ENCODE measurements at regions of chr19 and their contacts with region 1.

Region 1: DNA sequence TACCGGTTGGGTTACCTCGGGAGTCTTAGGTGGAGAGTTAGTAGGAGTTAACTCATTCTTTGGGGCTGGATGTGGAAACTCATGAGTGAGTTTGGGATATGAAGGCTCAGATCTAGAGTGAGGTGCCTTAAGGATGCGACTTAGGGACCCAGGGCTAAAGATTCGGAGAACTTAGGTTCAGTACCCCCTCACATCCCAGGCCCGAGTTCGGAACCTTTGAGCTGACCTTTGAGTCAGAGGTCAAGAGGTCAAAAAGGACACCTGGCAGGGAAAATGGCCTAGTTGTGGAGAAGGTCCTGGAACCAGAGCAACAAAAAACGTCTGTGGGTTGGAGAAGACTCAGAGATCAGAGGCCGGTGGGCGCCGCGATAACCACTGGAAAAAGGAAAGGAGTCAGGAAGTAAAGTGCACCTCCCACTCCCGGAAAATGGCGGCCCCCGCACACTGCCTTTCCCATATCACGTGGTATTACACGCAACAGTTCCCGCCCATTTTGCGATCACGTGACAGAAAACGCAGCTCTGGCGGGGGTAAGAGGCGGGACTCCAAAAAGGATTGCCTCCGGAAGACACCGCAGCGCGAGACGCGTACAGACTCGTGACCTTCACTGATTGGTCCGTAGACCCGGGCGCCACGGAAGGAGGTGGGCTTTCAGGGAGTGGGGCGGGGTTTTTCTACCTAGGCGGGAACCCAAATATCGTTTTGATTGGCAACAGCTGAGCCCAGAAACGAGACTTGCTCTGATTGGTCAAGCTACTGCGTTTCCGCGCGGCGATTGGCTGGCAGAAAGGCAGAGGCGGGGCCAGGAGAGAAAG is at the start of gene ACTMAP:
- DNase-seq: peak; percentile 100
- H3K4me3 ChIP-seq: peak within 1 kb of the TSS; percentile 62 to 86 (median 78)
- H3K27ac ChIP-seq: peak within 1 kb of the TSS; percentile 93 to 96
- H3K4me1 ChIP-seq: peaks cover 0 to 22% of the 10 kb centered on the region in 2 donors
- H3K27me3 ChIP-seq: no peaks in the 10 kb centered on the region
- CTCF ChIP-seq: peak in 2 of 3 donors; percentile 12 to 18
- POLR2A ChIP-seq: peak; percentile 79
- total RNA-seq, gene ACTMAP: 2.6 to 3.2 (median 2.9) TPM

Region 2: DNA sequence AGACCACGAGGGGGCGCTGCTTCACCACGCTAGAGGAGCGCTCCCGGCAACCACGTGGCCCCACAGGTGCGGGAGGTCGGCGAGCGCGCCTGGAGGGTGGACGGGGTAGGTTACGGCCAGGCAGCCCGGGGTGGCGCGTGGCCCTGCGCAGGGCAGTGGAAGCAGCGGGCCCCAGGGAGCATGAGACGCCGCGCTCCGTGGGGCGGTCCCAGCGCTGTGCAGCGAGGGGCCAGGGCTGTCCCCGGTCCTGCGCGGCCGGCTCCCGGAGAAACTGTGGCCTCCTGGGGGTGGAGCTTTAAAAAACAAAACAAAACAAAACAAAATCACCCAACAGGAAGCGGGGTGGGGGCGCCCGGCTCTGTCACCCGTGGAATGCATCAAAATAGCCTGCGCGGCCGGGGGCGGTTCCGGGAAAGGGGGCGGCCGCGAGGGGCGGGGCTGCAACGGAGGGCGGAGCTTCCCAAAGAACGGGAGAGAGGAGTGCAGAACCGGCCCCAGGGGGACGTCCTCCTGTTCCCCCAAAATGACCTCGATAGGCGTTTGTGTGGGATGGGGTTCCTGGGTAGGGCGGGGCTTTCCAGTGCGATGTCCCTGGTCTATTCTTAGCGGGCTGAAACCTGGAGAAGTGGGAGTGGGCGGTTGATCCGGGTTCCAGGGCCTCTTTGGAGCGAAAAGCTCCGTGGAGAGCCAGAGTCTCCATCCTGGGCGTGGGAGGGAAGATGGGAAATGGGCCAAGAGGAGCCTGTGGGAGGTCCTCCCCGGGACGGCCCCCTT is 87.2 kb before region 1 on chr19:
- intact Hi-C with region 1: loop called (anchors 5 kb)
- DNase-seq: peak; percentile 88
- H3K4me3 ChIP-seq: peak overlapping the region; percentile 54 to 81 (median 69)
- H3K27ac ChIP-seq: peak overlapping the region; percentile 80 to 91
- H3K4me1 ChIP-seq: no peaks in the 10 kb centered on the region
- H3K27me3 ChIP-seq: no peaks in the 10 kb centered on the region
- CTCF ChIP-seq: peak in 2 of 3 donors; percentile 99
- POLR2A ChIP-seq: no peak

Region 3: DNA sequence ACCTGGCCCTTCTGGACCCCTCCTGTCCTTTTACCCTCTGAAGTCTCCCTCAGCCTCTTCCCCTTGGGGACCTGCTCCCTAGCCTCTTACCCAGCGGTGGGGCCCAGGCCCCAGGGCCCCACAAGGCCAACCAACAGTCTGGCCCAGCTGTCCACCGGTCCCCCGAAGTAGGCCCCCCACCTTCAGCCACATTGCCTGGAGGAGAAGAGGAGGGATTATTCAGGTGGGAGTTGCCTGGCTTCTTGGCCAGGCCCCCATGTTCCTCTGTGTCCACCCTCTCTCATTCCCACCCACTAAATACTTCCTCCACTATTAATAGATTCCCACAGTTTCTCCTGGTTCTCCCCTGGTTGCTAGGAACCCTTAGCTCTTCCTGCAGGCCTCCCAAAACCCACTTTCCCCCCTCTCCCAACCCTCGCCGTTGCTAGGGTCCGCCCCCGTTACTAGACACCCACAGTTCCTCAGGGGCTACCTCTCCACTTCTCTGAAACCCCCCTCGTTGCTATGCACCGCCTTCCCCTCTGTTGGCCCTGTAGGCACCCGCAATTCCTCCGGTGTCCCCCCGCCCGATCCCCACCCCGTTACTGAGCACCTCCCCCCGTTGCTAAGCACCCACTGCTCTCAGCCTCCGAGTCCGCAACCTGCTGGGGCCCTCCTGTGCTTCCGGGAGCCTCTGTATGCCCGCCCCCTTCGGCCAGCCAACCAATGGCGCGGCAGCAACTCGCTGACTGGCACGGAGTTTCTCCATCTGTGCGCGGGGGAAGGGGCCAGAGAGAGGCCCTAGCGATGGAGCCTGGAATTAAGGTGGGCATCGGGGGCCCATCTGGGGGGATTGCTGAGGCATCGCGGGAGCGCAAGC is 35.6 kb before region 1 on chr19:
- intact Hi-C with region 1: loop called (anchors 1 kb)
- DNase-seq: peak; percentile 91 to 92
- H3K4me3 ChIP-seq: peak overlapping the region; percentile 47 to 91 (median 86)
- H3K27ac ChIP-seq: peak overlapping the region; percentile 94 to 99
- H3K4me1 ChIP-seq: no peaks in the 10 kb centered on the region
- H3K27me3 ChIP-seq: no peaks in the 10 kb centered on the region
- CTCF ChIP-seq: no peak
- POLR2A ChIP-seq: no peak